Left cardiac atrium (tissue), 4 donors: ENCODE measurements at regions of chr5 and their contacts with region 1.

Region 1: GRCh38 chr5:179060116-179061008 is at the start of gene ZNF354C:
- DNase-seq: peak; percentile 93
- ATAC-seq: peak; percentile 99 to 100
- total RNA-seq, gene ZNF354C: 3.9 to 4.9 TPM

Region 2: GRCh38 chr5:178515776-178516503 is 544.4 kb before region 1 on chr5:
- intact Hi-C with region 1: no loop called
- DNase-seq: no peak
- ATAC-seq: no peak

Region 3: DNA sequence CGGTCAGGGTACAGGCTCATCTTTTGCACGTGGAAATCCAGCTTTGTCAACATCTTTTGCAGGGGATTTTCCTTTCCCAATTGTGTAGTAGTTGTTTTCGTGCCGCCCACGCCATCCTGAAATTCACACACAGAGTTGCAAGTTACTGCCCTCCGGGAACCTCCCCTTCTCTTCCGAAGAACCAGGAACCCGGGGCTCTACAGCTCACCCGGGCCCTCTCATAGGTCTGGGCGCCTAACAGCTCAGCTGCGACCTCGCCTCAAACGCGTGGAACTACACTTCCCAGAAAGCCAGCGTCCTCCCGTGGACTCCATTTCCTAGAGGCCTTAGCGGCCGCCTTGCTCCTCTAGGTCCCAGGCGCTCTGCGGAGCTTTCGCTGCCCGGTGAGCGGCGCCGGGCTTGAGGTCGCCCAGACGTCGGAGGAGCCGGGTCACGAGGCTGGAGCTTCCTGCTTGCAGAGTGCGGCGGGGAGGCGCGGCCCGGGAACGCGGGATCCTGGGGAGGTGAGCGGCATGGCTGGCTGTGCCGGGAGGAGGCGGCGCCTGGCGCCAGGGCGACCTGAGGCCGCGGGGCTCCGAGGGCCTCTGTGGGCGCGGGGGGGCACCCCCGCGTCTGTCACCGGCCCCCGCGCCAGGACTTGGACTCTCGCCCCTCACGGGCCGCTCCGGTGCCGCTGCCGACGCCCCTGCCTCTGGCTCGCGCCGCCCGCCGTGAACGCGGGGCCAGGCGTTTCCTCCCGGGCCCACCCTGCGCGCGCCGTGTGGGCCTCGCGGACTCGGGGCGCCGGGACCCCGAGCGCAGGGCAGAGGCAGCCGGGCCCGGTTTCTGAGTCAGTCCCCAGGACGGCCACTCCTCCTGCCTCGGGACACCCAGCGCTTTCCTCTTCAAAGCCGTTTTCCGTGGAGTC is 200.5 kb before region 1 on chr5 and contains the start of gene ZNF354B:
- intact Hi-C with region 1: loop called in 1 of 2 experiments (anchors 5 kb)
- DNase-seq: peak; percentile 92
- ATAC-seq: peak; percentile 98 to 99
- total RNA-seq, gene ZNF354B: 8.2 to 9.2 TPM

Region 4: DNA sequence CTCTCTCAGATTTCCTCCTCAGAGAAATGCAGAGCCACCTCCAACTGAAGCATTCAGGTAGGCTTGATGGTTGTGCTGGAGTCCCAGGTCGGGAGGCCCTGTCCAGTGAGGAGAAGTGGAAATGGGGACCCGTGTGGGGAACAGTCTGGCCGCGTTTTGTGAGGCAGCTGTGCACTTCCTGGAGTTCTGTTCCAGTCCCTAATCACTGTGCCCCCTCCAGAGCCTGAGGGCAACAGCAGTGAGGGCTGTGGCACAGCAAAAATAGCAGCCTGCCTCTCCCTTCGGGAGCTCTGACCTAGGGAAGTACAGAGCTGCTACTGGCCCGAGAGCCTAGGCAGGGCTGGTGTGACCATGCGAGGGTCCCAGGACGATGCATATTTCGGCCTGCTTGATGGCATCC is 184.2 kb before region 1 on chr5:
- intact Hi-C with region 1: no loop called
- DNase-seq: no peak
- ATAC-seq: no peak